ENCODE measurements at regions of chr5 and their contacts with region 1.

Region 1: GRCh38 chr5:112551419-112552032 is 132.4 kb upstream of the EPB41L4A start:
- DNase-seq: peak; percentile 59
- ATAC-seq: peak; percentile 80
- H3K4me3 ChIP-seq: no peak overlapping the region
- H3K27ac ChIP-seq: no peak overlapping the region
- H3K4me1 ChIP-seq: no peaks in the 10 kb centered on the region
- H3K27me3 ChIP-seq: peaks cover 8% of the 10 kb centered on the region; the same call in 1 of the 2 replicates
- CTCF ChIP-seq: peak; percentile 65 to 80 (median 79); a peak in 5 of 6 replicates
- POLR2A ChIP-seq: no peak
- RAD21 ChIP-seq: peak; percentile 92

Region 2: DNA sequence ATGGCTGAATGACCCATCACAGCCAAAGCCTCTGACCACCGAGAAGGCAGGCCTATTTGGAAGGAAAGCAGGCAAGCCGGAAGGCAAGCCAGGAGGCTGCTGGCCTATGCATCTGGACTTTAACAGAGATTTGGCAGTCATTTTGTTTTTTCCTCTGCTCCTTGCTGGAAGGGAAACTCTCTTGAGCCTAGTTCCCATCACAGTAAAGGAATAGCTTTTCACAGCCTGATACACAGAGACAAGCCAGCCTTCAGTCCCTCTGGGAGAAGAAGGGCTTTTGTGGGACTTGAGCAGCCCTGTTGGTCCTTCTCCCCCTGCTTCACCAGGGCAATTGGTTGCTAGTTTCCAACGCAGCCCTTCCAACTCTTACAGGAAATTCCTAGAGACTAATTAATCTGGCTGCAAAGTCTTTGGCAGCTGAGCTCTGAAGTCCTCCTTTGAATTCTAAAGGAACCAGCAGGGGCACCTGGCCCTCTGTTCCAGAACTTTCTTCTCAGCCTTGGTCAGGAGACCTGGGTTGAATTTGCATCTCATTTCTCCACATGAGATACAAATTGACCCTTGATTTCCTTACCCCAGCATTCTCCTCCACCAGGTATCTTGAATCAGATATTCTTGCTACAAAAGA is 24.9 kb after region 1 on chr5:
- CTCF ChIA-PET with region 1: no interaction called
- POLR2A ChIA-PET with region 1: no interaction called
- RAD21 ChIA-PET with region 1: no interaction called
- intact Hi-C with region 1: no loop called
- DNase-seq: no peak
- ATAC-seq: no peak
- H3K4me3 ChIP-seq: no peak overlapping the region
- H3K27ac ChIP-seq: no peak overlapping the region
- H3K4me1 ChIP-seq: no peaks in the 10 kb centered on the region
- H3K27me3 ChIP-seq: no peaks in the 10 kb centered on the region
- CTCF ChIP-seq: no peak
- POLR2A ChIP-seq: no peak
- RAD21 ChIP-seq: no peak

Region 3: DNA sequence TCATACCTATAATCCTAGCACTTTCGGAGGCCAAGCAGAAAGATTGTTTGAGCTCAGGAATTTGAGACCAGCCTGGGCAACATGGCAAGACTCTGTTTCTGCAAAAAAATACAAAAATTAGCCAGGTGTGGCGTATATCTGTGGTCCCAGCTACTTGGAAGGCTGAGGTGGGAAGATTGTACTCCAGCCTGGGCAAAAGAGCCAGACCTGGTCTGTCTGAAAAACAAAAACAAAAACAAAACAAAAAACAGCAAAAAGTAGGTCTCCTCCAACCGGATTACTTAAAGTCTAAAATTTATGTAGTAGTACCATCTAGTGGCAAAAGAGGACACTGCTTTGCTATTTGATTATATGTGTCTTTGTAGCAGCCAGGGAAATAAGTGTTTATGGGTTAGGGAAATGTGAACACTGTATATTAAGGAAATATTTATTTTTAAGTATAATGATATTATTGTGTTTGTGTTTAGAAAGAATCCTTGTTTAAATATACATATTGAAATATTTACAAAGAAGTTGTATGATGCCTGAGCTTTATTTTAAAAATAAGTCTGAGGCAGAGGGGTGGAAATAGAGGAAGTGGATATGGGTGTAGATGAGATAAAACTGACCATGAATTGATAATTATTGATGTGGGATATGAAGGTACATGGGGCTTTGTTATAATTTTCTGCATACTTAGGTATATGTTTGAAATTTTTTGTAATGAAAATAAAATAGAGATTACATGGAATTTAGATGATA is 206.1 kb after region 1 on chr5:
- CTCF ChIA-PET with region 1: interaction called, 26 read pairs
- POLR2A ChIA-PET with region 1: no interaction called
- RAD21 ChIA-PET with region 1: interaction called in 1 of 2 experiments, 6 read pairs
- intact Hi-C with region 1: loop called (anchors 1 kb)
- DNase-seq: peak; percentile 48
- ATAC-seq: peak; percentile 83
- H3K4me3 ChIP-seq: no peak overlapping the region
- H3K27ac ChIP-seq: no peak overlapping the region
- H3K4me1 ChIP-seq: peaks cover 4 to 5% of the 10 kb centered on the region in 2 experiments
- H3K27me3 ChIP-seq: no peaks in the 10 kb centered on the region
- CTCF ChIP-seq: peak; percentile 64 to 78 (median 76)
- POLR2A ChIP-seq: no peak
- RAD21 ChIP-seq: peak; percentile 87

Region 4: DNA sequence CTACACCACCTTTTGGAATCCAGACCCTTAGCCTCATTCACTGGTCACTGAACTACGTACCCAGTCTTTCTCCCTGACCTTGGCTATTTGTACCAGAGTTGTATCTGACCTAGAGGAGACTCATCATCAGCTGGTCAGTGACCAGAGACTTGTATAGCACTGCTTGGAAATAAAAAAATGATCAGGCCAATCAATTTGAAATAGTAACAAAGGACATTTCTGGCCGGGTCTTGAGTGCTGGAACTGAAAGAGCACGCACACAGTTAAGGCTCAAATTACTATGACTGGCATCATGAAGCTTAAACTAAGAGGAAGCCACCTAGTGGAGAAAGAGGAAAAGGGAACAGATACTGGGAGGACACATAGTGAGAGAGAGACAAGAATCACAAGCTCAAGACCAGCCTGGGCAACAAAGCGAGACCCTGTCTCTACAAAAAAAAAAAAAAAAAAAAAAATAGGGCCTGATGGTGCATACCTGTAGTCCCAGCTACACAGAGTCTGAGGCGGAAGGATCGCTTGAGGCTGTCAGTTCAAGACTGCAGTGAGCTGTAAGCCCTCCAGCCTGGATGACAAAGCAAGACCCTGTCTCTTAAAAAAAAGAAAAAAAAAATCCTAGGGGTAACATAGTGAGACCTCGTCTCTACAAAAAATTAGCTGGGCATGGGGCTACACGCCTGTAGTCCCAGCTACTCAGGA is 296.7 kb after region 1 on chr5:
- CTCF ChIA-PET with region 1: interaction called, 6 read pairs
- POLR2A ChIA-PET with region 1: no interaction called
- RAD21 ChIA-PET with region 1: interaction called in 1 of 2 experiments, 3 read pairs
- intact Hi-C with region 1: loop called (anchors 5 kb)
- DNase-seq: peak; percentile 68
- ATAC-seq: peak; percentile 99
- H3K4me3 ChIP-seq: 0 out of 4 replicates have a peak overlapping the region, but pooled peaks of 1 of the 2 experiments have one; percentile 13
- H3K27ac ChIP-seq: no peak overlapping the region
- H3K4me1 ChIP-seq: peaks cover 0 to 4% of the 10 kb centered on the region in 2 experiments; a peak in 1 of 4 replicates
- H3K27me3 ChIP-seq: no peaks in the 10 kb centered on the region
- CTCF ChIP-seq: peak; percentile 54 to 76 (median 73); a peak in 5 of 6 replicates
- POLR2A ChIP-seq: no peak
- RAD21 ChIP-seq: peak; percentile 61

Region 5: DNA sequence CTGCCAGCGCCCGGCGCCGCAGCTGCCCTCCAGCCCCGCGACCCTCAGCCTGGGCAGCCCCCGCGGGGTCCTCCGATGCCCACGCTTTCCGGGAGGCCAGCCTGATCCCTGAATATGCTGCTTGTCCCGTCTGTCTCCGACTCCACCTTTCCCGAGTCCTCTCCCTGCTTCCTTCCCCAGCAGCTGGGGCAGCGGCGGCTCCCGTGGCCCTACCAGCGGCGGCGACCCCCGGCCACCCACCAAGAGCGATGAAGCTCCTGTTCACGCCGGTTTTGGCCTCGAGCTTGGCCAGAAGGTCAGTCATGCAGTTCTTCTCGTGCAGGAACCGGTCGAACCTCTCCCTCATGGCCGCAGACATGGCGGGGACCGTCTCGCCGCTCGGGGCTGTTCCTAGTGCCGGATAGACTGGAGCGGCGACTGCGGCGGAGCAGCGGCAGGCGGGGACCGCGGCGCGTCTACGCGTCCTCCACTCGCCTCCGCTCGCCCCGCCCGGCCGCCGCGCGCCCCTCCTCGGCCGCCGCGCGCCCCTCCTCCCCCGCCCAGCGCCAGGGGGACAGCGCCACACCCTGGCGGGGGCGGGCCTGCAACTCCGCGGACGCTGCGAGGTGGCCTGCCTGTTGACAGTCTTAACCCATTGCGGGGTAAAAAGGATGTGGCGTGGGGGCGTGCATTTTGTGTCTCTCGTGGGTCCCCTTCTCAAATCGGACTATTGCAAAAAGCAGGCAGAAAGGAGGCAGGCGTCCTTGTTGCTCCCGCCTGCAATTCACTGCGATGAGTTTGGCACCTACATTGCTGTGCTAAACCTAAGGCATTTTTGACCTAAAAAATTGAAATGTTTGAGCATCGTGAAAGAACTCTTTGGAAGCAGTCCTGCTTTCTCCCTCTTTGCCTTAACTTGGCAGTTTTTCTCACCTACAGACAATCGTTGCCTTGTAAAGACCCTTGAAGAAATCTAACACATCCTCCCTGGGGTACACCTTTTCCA is 370.6 kb after region 1 on chr5 and contains the start of gene REEP5:
- CTCF ChIA-PET with region 1: no interaction called
- POLR2A ChIA-PET with region 1: no interaction called
- RAD21 ChIA-PET with region 1: no interaction called
- intact Hi-C with region 1: loop called (anchors 5 kb)
- DNase-seq: peak; percentile 48
- ATAC-seq: peak; percentile 85
- H3K4me3 ChIP-seq: peak within 1 kb of the TSS; percentile 93 to 95
- H3K27ac ChIP-seq: peak within 1 kb of the TSS; percentile 93
- H3K4me1 ChIP-seq: peaks cover 8 to 20% of the 10 kb centered on the region in 2 experiments; a peak in 3 of 4 replicates
- H3K27me3 ChIP-seq: no peaks in the 10 kb centered on the region
- CTCF ChIP-seq: peak; percentile 33 to 69 (median 68); a peak in 5 of 6 replicates
- POLR2A ChIP-seq: peak; percentile 84
- RAD21 ChIP-seq: peak; percentile 64
- total RNA-seq, gene REEP5: 71.7 TPM

Region 6: GRCh38 chr5:112965733-112966700 is 414.5 kb after region 1 on chr5:
- CTCF ChIA-PET with region 1: no interaction called
- POLR2A ChIA-PET with region 1: no interaction called
- RAD21 ChIA-PET with region 1: no interaction called
- intact Hi-C with region 1: loop called (anchors 2 kb)
- DNase-seq: no peak
- ATAC-seq: no peak
- H3K4me3 ChIP-seq: no peak overlapping the region
- H3K27ac ChIP-seq: no peak overlapping the region
- H3K4me1 ChIP-seq: peaks cover 3 to 16% of the 10 kb centered on the region in 2 experiments; a peak in 3 of 4 replicates
- H3K27me3 ChIP-seq: no peaks in the 10 kb centered on the region
- CTCF ChIP-seq: no peak
- POLR2A ChIP-seq: no peak
- RAD21 ChIP-seq: no peak

Measured in HCT116 (cell line).